HepG2 (cell line): ENCODE measurements at regions of chr7 and their contacts with region 1.

Region 1: GRCh38 chr7:149624419-149625339 is 127.1 kb upstream of the ZNF746 start:
- DNase-seq: peak; percentile 88
- ATAC-seq: peak; percentile 97
- H3K4me3 ChIP-seq: peak overlapping the region; percentile 81 to 90 (median 86)
- H3K27ac ChIP-seq: peak overlapping the region; percentile 71
- H3K4me1 ChIP-seq: peaks cover 14% of the 10 kb centered on the region
- H3K27me3 ChIP-seq: no peaks in the 10 kb centered on the region
- CTCF ChIP-seq: peak; percentile 93
- EP300 ChIP-seq: peak in 1 of 2 experiments; percentile 36; a peak in 1 of 4 replicates
- POLR2A ChIP-seq: peak; percentile 78 to 93
- RAD21 ChIP-seq: no peak

Region 2: GRCh38 chr7:149422129-149422913 is 202.4 kb before region 1 on chr7:
- CTCF ChIA-PET with region 1: no interaction called
- POLR2A ChIA-PET with region 1: no interaction called
- in situ Hi-C with region 1: no loop called
- intact Hi-C with region 1: loop called (anchors 5 kb)
- DNase-seq: peak; percentile 44
- ATAC-seq: peak; percentile 91
- H3K4me3 ChIP-seq: peak overlapping the region; percentile 50 to 63 (median 50); a peak in 5 of 6 replicates
- H3K27ac ChIP-seq: peak overlapping the region; percentile 49
- H3K4me1 ChIP-seq: peaks cover 15% of the 10 kb centered on the region
- H3K27me3 ChIP-seq: no peaks in the 10 kb centered on the region; a peak in 1 of 5 replicates
- CTCF ChIP-seq: peak; percentile 59; the same call in 1 of the 2 replicates
- EP300 ChIP-seq: peak in 1 of 2 experiments; percentile 17; a peak in 1 of 4 replicates
- POLR2A ChIP-seq: peak; percentile 35 to 54; a peak in 2 of 4 replicates
- RAD21 ChIP-seq: peak; percentile 83

Region 3: DNA sequence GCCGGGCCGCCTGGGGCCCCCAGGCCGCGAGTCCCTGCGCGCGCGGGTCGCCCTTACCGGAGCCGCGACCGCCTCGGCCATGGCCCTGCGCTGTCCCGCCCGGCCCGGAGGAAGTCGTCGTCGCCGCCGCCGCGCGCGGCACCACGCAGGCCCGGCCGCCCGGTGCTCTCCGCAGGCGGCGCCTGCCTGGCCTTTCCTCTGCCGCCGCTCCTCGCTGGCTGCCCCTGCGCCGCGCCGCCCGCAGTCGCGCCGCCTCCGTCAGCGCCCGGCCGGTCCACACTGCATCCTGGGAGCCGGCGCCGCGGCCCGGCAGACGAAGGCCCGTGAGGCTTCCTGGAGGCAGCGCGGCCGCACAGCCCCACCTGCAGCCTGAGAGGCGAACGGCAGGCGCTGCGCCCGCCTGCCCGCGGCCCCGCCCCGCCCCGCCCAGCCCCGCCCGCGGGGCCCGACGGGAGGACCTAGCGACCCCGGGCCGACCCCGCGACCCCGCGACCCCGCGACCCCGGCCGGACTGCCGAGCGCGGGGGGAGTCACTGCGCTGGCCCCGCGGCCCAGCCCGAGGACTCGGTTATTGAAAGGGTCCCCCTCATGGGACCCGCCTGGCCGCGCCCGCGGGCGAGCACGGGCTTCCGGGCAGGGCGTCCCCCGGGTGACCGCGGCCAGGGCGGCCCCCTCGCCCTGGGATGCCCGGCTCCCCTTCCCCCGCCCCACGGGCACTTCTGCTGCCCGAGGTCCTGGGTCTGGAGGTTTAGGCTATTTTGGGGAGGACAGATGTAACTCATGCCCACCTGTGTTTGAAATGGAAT is 127.0 kb before region 1 on chr7 and contains the start of gene ZNF746:
- CTCF ChIA-PET with region 1: no interaction called
- POLR2A ChIA-PET with region 1: no interaction called
- in situ Hi-C with region 1: no loop called
- intact Hi-C with region 1: loop called (anchors 1 kb)
- DNase-seq: peak; percentile 67
- ATAC-seq: peak; percentile 85
- H3K4me3 ChIP-seq: peak within 1 kb of the TSS; percentile 68 to 85 (median 77)
- H3K27ac ChIP-seq: peak within 1 kb of the TSS; percentile 55
- H3K4me1 ChIP-seq: peaks cover 18% of the 10 kb centered on the region
- H3K27me3 ChIP-seq: peaks cover 2 to 39% of the 10 kb centered on the region in 2 experiments; a peak in 4 of 5 replicates
- CTCF ChIP-seq: peak; percentile 76
- EP300 ChIP-seq: no peak
- POLR2A ChIP-seq: peak in 1 of 2 experiments; percentile 47; a peak in 2 of 4 replicates
- RAD21 ChIP-seq: peak; percentile 88
- total RNA-seq, gene ZNF746: 8.0 and 8.1 TPM in 2 replicates

Region 4: DNA sequence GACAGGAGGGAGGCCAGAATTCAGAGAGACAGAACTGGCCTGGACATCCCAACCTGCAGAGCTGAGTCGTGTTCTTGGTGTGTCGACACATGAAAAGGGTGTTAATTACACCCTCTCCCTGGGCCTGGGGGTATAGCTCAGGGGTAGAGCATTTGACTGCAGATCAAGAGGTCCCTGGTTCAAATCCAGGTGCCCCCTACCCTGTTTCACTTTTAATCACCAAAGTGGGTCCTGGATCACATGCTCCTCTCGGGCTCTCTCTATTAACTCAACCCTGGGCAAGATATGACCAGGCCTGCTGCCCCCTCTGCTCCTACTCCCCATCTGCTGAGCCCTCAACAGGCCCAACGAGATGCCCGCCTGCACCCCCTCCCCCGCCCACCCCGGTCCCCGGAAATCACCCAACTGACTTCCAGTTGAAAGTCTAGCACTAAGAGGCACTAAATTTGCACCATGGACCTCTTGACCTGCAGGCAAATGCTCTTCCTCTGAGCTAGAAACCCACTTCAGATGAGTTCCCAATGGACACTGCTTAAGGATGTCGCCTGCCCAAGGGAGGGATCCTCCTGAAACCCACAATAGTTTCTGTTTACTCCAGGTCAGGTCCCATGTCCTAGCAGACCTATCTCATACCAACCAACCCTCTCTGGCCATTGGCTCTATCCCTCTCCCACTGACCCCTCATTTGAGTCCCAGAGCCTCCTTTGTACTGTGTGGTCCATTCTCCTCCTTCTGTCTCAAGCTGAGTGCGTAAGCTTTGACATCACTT is 11.1 kb after region 1 on chr7:
- CTCF ChIA-PET with region 1: no interaction called
- POLR2A ChIA-PET with region 1: interaction called, 24 read pairs
- in situ Hi-C with region 1: no loop called
- intact Hi-C with region 1: no loop called
- DNase-seq: peak; percentile 51
- ATAC-seq: peak; percentile 88
- H3K4me3 ChIP-seq: no peak overlapping the region
- H3K27ac ChIP-seq: no peak overlapping the region
- H3K4me1 ChIP-seq: no peaks in the 10 kb centered on the region
- H3K27me3 ChIP-seq: peaks cover 0 to 36% of the 10 kb centered on the region in 2 experiments; a peak in 3 of 5 replicates
- CTCF ChIP-seq: no peak
- EP300 ChIP-seq: no peak
- POLR2A ChIP-seq: no peak
- RAD21 ChIP-seq: no peak

Region 5: GRCh38 chr7:149690688-149691446 is 66.2 kb after region 1 on chr7:
- CTCF ChIA-PET with region 1: no interaction called
- POLR2A ChIA-PET with region 1: interaction called, 4 read pairs
- in situ Hi-C with region 1: no loop called
- intact Hi-C with region 1: loop called (anchors 10 kb)
- DNase-seq: peak; percentile 92
- ATAC-seq: peak; percentile 95
- H3K4me3 ChIP-seq: peak overlapping the region; percentile 44 to 74 (median 66)
- H3K27ac ChIP-seq: peak overlapping the region; percentile 19
- H3K4me1 ChIP-seq: peaks cover 16% of the 10 kb centered on the region
- H3K27me3 ChIP-seq: no peaks in the 10 kb centered on the region; a peak in 2 of 5 replicates
- CTCF ChIP-seq: 0 out of 2 replicates have a peak, but pooled peaks have one; percentile 4
- EP300 ChIP-seq: no peak
- POLR2A ChIP-seq: no peak
- RAD21 ChIP-seq: peak; percentile 29; the same call in 1 of the 2 replicates

Region 6: GRCh38 chr7:149729983-149730801 is 105.5 kb after region 1 on chr7:
- CTCF ChIA-PET with region 1: no interaction called
- POLR2A ChIA-PET with region 1: no interaction called
- in situ Hi-C with region 1: no loop called
- intact Hi-C with region 1: no loop called
- DNase-seq: no peak
- ATAC-seq: no peak
- H3K4me3 ChIP-seq: no peak overlapping the region
- H3K27ac ChIP-seq: no peak overlapping the region
- H3K4me1 ChIP-seq: no peaks in the 10 kb centered on the region
- H3K27me3 ChIP-seq: no peaks in the 10 kb centered on the region
- CTCF ChIP-seq: peak; percentile 17; the same call in 1 of the 2 replicates
- EP300 ChIP-seq: no peak
- POLR2A ChIP-seq: no peak
- RAD21 ChIP-seq: no peak